PC-9 (cell line): ENCODE measurements at regions of chr6 and their contacts with region 1.

Region 1: DNA sequence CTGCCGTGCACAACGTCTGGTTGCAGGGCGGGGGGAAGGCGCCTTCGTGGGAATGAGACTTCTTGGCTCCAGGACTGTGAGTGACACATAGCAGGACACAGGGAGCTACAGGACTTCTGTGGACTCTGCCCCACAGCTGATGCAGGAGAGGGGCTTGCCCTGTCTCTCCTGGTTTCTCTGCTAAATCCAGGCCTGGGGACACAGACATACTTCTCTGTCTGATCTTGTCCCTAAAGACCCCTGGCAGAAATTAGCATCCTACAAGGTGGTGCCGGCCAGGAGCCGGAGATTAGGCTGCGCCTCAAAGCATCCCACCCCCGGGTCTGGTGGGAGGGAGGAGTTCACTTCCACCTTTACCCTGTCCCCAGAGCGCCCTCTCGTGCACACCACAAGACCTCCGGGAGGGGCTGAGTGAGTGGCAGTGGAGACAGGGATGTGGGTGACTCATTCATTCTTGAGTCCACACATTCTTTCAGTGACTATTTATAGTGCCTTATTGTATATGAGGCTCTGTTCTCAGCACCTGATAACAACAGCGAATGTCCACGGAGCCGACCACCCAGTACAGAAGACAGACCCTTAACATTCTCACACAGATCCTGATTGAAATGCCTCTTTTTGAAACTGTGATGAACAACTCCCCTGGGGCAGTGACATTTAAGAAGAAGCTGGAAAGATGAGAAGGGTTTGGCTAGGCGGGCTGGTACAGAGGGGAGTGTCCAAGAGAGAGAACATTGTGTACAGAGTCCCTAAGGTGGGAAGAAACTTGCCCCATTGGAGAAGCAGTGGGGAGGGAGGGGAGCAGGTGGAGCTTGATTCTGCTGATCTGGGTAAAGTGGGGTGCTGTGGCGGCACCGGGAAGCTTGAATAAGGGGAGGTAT is 39.0 kb downstream of the GMPR start:
- DNase-seq: peak; percentile 83 to 88
- H3K4me3 ChIP-seq: peak overlapping the region; percentile 4; the same call in 1 of the 2 replicates
- H3K27ac ChIP-seq: no peak overlapping the region
- H3K4me1 ChIP-seq: peaks cover 11% of the 10 kb centered on the region
- H3K27me3 ChIP-seq: no peaks in the 10 kb centered on the region
- CTCF ChIP-seq: peak; percentile 69

Region 2: DNA sequence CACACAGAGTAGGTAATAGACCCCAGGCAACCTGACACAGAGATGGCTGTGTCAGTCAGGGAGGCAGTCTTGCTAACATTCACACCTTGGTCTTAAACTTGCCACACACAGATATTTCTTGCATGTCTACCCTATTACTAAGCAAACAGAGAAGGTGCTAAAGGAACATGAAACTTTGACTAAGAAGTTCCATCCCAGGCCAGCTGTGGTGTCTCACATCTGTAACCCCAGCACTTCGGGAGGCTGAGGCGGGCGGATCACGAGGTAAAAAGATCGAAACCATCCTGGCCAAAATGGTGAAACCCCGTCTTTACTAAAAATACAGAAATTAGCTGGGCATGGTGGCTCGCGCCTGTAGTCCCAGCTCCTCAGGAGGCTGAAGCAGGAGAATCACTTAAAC is 1253.9 kb before region 1 on chr6:
- CTCF ChIA-PET with region 1: no interaction called
- POLR2A ChIA-PET with region 1: no interaction called
- intact Hi-C with region 1: no loop called
- DNase-seq: peak in 1 of 2 experiments; percentile 38
- H3K4me3 ChIP-seq: no peak overlapping the region
- H3K27ac ChIP-seq: no peak overlapping the region
- H3K4me1 ChIP-seq: peaks cover 34% of the 10 kb centered on the region
- H3K27me3 ChIP-seq: no peaks in the 10 kb centered on the region
- CTCF ChIP-seq: no peak

Region 3: DNA sequence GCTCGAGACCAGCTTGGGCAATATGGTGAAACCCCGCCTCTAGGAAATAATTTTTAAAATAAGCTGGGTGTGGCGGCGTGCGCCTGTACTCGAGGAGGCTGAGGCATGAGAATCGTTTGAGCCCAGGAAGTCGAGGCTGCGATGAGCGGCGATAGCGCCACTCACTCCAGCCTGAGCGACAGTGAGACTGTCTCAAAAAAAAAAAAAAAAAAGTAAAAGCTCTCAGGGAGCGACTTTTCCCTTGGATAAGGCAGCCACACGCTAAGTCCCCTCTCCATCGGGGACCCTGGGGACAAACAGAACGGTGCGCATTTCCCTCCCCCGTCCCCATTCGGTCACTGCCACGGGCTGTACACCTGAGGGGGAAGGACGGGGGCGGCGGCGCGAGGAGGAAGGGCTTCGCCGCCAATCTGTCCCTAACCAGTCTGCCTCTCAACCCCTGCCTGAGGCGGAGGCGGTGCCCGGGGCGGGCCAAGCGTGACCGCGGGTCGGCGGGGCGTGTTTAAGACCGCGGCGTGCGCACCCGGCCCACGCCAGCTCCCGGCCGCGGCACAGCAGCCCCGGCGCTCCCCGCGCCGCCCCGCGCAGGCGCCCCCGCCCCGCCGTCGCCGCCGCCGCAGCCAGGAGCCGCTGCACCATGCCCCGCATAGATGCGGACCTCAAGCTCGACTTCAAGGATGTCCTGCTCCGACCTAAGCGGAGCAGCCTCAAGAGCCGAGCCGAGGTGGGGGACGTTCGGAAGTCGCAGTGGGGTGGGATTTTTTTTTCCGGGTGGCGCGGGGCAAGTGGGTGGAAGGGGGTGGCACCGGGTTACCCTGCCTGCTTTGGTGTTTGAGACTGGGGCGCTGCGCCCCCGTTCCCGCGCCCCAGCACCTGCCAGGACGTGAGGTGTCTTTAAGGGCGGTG is 39.0 kb before region 1 on chr6 and contains the start of gene GMPR:
- CTCF ChIA-PET with region 1: interaction called, 3 read pairs
- POLR2A ChIA-PET with region 1: no interaction called
- intact Hi-C with region 1: loop called (anchors 2 kb)
- DNase-seq: peak in 1 of 2 experiments; percentile 71
- H3K4me3 ChIP-seq: peak within 1 kb of the TSS; percentile 54
- H3K27ac ChIP-seq: no peak within 1 kb of the TSS
- H3K4me1 ChIP-seq: peaks cover 10% of the 10 kb centered on the region; the same call in 1 of the 2 replicates
- H3K27me3 ChIP-seq: peaks cover 64% of the 10 kb centered on the region
- CTCF ChIP-seq: no peak
- total RNA-seq, gene GMPR: 2.0 and 2.4 TPM in 2 replicates

Region 4: GRCh38 chr6:16921399-16922110 is 644.2 kb after region 1 on chr6:
- CTCF ChIA-PET with region 1: no interaction called
- POLR2A ChIA-PET with region 1: interaction called, 10 read pairs
- intact Hi-C with region 1: no loop called
- DNase-seq: no peak
- H3K4me3 ChIP-seq: no peak overlapping the region
- H3K27ac ChIP-seq: no peak overlapping the region
- H3K4me1 ChIP-seq: no peaks in the 10 kb centered on the region
- H3K27me3 ChIP-seq: no peaks in the 10 kb centered on the region
- CTCF ChIP-seq: no peak